ENCODE measurements at regions of chr7 and their contacts with region 1.

Region 1: GRCh38 chr7:6323967-6324701 is 51.7 kb upstream of the CYTH3 start:
- DNase-seq: no peak
- H3K4me3 ChIP-seq: no peak overlapping the region
- H3K27ac ChIP-seq: no peak overlapping the region
- H3K4me1 ChIP-seq: no peaks in the 10 kb centered on the region
- H3K27me3 ChIP-seq: no peaks in the 10 kb centered on the region
- CTCF ChIP-seq: no peak

Region 2: GRCh38 chr7:5854738-5855137 is 469.4 kb before region 1 on chr7:
- intact Hi-C with region 1: loop called (anchors 10 kb)
- DNase-seq: no peak
- H3K4me3 ChIP-seq: no peak overlapping the region
- H3K27ac ChIP-seq: no peak overlapping the region
- H3K4me1 ChIP-seq: no peaks in the 10 kb centered on the region
- H3K27me3 ChIP-seq: no peaks in the 10 kb centered on the region
- CTCF ChIP-seq: no peak

Region 3: GRCh38 chr7:5997222-5997808 is 326.8 kb before region 1 on chr7:
- intact Hi-C with region 1: loop called (anchors 5 kb)
- DNase-seq: peak; percentile 53
- H3K4me3 ChIP-seq: no peak overlapping the region
- H3K27ac ChIP-seq: no peak overlapping the region
- H3K4me1 ChIP-seq: no peaks in the 10 kb centered on the region
- H3K27me3 ChIP-seq: no peaks in the 10 kb centered on the region
- CTCF ChIP-seq: peak; percentile 58

Region 4: GRCh38 chr7:6158424-6159096 is 165.6 kb before region 1 on chr7:
- intact Hi-C with region 1: loop called (anchors 5 kb)
- DNase-seq: no peak
- H3K4me3 ChIP-seq: no peak overlapping the region
- H3K27ac ChIP-seq: no peak overlapping the region
- H3K4me1 ChIP-seq: no peaks in the 10 kb centered on the region
- H3K27me3 ChIP-seq: no peaks in the 10 kb centered on the region
- CTCF ChIP-seq: no peak

Measured in colonic mucosa (tissue), 4 donors.